Activated CD4-positive, alpha-beta T cell treated with anti-CD3 and anti-CD28 coated beads for 36 hours (primary cell): ENCODE measurements at regions of chr15 and their contacts with region 1.

Region 1: GRCh38 chr15:77543159-77543882 is 89.4 kb downstream of the LINGO1 start:
- DNase-seq: peak; percentile 89
- ATAC-seq: peak; percentile 95
- H3K4me3 Mint-ChIP-seq: peak overlapping the region; percentile 66
- H3K27ac Mint-ChIP-seq: peak overlapping the region; percentile 66
- H3K4me1 Mint-ChIP-seq: peaks cover 4% of the 10 kb centered on the region
- H3K27me3 Mint-ChIP-seq: no peaks in the 10 kb centered on the region

Region 2: DNA sequence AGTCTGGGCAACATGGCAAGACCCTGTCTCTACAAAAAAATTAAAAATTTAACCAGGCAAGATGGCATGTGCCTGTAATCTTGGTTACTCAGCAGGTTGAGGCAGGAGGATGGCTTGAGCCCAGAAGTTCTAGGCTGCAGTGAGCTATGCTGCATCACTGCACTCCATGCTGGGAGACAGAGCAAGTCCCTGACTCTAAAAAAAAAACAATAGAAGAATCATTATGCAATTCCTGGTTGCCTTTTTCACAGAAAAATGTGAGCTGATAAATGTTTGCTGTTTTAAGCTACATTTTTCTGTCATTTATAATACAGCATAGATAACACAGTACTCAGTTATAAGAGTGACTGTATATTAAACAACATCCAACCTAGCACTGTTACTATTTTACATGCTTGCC is 786.9 kb before region 1 on chr15:
- CTCF ChIA-PET with region 1: no interaction called
- POLR2A ChIA-PET with region 1: no interaction called
- intact Hi-C with region 1: no loop called
- DNase-seq: no peak
- ATAC-seq: no peak
- H3K4me3 Mint-ChIP-seq: no peak overlapping the region
- H3K27ac Mint-ChIP-seq: no peak overlapping the region
- H3K4me1 Mint-ChIP-seq: peaks cover 14% of the 10 kb centered on the region
- H3K27me3 Mint-ChIP-seq: no peaks in the 10 kb centered on the region

Region 3: DNA sequence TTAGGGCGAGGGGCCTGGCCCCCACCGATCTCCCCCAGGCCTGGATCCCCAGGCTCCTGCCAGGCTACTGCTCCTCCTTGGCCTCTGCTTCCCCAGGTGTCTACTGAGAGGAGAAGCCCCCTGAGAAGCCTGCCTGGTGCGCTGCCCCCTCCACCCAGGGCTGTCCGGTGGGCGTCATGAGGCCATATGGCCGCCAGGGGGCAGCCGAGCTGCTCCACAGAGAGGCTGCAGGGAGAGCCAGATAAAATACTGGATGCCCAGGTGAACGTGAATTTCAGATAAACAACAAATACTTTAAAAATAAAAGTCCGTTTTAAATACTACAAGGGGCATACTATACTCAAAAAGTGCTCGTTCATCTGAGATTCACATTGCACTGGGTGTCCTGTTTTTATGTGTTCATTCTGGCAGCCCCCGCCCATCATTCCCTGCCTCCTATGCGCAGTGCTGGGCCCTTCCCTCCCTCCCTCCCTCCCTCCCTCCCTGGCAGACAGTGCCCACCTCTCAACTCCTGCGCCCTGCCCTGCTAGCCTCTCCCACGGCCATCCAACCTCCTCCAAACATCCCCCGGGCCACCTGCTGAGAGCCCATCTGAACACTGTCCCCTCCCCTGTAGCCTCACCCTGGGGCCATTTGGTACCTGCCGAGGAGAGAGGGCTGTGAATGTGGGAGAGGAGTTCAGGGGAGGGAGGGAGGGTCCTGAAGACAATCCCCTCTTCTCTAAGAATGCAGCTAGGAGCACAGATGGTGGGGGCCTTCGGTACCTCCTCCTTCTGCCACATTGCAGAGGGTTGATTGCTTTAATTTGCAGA is 518.8 kb before region 1 on chr15:
- CTCF ChIA-PET with region 1: interaction called, 3 read pairs
- POLR2A ChIA-PET with region 1: no interaction called
- intact Hi-C with region 1: loop called in 1 of 2 experiments (anchors 5 kb)
- DNase-seq: peak; percentile 82
- ATAC-seq: no peak
- H3K4me3 Mint-ChIP-seq: no peak overlapping the region
- H3K27ac Mint-ChIP-seq: peak overlapping the region; percentile 76
- H3K4me1 Mint-ChIP-seq: peaks cover 48% of the 10 kb centered on the region
- H3K27me3 Mint-ChIP-seq: no peaks in the 10 kb centered on the region

Region 4: DNA sequence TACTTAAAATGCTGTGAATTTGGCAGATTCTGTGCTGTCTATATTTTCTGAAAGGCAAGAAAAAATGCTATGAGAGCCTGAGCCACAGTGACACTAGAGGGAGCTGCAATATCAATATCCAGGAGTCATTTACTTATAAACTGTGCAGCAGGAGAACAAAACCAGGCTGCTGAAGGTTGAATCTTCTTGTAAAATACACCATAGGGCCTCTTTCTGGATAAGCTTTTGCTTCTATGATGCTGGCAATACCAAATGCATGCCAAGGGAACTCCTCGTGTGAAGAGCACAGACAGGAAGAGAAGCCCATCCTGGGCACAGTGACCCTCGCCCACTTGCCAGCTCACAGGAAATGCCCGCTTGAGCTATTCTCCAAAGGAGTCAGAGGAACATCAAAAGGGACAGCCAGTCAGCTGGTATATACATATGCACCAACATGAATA is 424.4 kb before region 1 on chr15:
- CTCF ChIA-PET with region 1: interaction called, 44 read pairs
- POLR2A ChIA-PET with region 1: no interaction called
- intact Hi-C with region 1: loop called (anchors 1 to 2 kb)
- DNase-seq: peak; percentile 39
- ATAC-seq: peak; percentile 47
- H3K4me3 Mint-ChIP-seq: no peak overlapping the region
- H3K27ac Mint-ChIP-seq: no peak overlapping the region
- H3K4me1 Mint-ChIP-seq: peaks cover 7% of the 10 kb centered on the region
- H3K27me3 Mint-ChIP-seq: no peaks in the 10 kb centered on the region

Region 5: DNA sequence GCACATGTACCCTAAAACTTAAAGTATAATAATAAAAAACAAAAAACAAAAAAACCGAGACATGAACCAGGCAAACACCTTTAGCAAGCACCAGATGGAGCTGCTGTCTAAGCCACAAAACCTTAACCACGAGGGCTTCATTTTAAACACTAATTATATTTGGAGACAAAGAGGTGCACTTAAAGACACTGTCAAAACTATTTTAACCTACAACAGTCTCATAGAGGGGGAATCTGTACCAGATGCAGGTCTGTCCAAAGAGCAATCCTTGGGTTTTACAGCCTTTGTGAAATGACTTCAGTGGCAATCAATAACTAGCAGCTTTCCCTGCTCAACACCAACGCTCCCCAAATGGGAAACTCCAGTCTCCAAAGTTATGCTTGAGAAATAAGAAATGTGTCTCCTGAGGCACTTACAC is 356.7 kb before region 1 on chr15:
- CTCF ChIA-PET with region 1: interaction called, 35 read pairs
- POLR2A ChIA-PET with region 1: no interaction called
- intact Hi-C with region 1: loop called (anchors 1 to 2 kb)
- DNase-seq: peak; percentile 30
- ATAC-seq: no peak
- H3K4me3 Mint-ChIP-seq: no peak overlapping the region
- H3K27ac Mint-ChIP-seq: no peak overlapping the region
- H3K4me1 Mint-ChIP-seq: peaks cover 55% of the 10 kb centered on the region
- H3K27me3 Mint-ChIP-seq: no peaks in the 10 kb centered on the region

Region 6: DNA sequence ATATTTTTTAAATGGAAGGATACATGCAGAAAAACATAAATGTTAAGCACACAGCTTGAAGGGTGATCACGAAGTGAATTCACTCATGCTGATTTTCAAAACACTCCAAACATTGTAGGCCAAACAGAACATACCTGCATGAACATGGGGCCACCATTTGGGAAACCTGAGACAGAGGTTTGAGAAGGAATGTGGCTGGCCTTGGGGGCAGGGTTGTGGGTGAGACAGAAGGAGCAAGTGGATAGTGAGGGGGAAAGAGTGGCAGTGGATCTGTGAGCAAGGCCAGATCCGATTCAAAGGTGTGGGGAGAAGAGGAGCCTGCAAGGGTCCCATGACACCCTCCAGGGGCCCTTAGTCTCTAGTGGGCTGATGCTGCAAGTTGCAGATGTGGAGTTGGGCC is 27.7 kb before region 1 on chr15:
- CTCF ChIA-PET with region 1: no interaction called
- POLR2A ChIA-PET with region 1: no interaction called
- intact Hi-C with region 1: no loop called
- DNase-seq: no peak
- ATAC-seq: no peak
- H3K4me3 Mint-ChIP-seq: no peak overlapping the region
- H3K27ac Mint-ChIP-seq: no peak overlapping the region
- H3K4me1 Mint-ChIP-seq: no peaks in the 10 kb centered on the region
- H3K27me3 Mint-ChIP-seq: no peaks in the 10 kb centered on the region

Region 7: DNA sequence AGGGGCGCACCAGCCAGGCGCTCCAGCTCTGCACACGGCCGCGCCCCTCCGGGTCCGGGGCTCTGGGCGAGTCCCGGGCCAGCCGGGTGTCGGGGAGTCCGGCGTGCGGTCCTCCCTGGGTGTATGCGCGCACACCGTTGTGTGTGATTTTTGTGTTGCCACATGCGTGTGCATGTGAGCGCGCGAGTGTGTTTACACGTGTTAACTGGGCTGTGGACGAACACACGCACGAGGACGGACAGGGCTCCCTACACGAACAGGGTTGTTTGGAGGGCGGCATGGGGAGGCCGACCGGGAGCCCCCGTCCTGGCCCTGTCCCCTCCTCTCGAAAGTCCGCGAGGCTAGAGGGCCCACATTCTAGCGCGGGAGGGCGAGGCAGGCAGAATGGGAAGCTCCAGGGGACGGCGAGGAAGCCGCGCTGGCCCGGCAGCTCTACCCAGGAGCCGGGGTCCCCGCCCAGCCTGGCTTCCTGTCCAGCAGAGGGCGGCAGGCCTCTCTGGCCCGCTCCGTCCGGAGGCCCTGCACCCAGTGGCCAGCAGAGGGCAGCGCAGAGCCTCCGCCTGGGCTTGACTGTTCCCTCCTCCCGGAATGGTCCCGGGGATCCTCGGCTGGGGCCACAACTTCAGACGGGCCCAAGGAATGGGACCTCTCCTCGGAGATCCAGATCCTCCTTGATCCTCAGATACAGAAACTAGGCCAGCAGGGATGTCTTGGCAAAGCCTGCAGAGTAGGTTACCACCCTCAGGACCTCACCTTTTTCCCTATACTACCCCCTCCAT is 90.0 kb after region 1 on chr15:
- CTCF ChIA-PET with region 1: interaction called, 11 read pairs
- POLR2A ChIA-PET with region 1: no interaction called
- intact Hi-C with region 1: no loop called
- DNase-seq: peak; percentile 83
- ATAC-seq: peak; percentile 86
- H3K4me3 Mint-ChIP-seq: no peak overlapping the region
- H3K27ac Mint-ChIP-seq: no peak overlapping the region
- H3K4me1 Mint-ChIP-seq: peaks cover 7% of the 10 kb centered on the region
- H3K27me3 Mint-ChIP-seq: peaks cover 43% of the 10 kb centered on the region